ENCODE measurements at regions of chr12 and their contacts with region 1.

Region 1: DNA sequence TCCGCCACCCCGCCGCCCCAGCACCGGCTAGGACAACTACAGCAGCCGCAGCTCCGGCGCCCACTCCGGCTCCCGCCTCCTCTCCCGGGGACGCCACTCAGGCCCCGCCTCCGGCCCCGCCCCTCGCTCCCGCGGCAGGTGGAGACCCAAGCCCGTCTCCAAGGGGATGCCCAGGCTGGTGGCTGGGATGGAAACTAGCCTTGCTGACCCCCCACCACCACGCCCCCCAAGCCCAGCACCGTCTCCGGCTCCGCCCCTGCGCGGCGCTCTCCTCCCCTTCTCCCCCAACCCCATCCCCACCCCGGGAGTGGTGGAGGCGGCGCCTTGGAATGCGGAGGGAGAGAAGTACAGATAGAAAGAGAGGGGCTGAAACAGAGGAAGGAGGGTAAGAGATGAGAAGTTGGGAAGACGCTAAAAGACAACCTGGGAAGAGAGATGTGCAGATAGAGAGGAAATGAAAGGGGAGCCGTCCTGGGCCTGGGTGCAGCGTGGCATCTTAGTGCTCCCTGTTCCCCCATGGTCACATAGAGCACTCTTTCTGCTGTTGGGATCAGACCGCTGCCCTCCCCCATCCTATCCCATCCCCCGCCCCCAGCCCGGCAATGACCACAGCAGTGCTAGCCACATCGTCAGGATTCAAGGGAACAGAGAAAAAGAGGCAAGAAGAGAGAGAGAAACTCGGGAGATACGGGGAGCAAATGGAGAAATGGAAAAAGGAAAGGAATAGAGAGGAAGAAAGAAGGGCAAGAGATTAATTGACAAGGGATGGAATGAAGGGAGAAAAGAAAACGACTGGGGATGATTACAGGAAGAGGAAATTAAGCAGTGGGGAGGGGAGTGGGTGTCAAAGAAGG is at the start of gene ITGA7:
- DNase-seq: peak; percentile 86 to 94 (median 92)
- ATAC-seq: peak; percentile 9 to 55 (median 52)
- H3K4me3 ChIP-seq: peak within 1 kb of the TSS; percentile 48 to 87 (median 71)
- H3K27ac ChIP-seq: peak within 1 kb of the TSS; percentile 65 to 99 (median 92)
- H3K4me1 ChIP-seq: peaks cover 0 to 59% (median 26%) of the 10 kb centered on the region in 12 donors
- H3K27me3 ChIP-seq: no peaks in the 10 kb centered on the region
- CTCF ChIP-seq: no peak
- POLR2A ChIP-seq: peak in 1 of 2 donors; percentile 24
- total RNA-seq, gene ITGA7: 199 to 1,007 (median 620) TPM

Region 2: DNA sequence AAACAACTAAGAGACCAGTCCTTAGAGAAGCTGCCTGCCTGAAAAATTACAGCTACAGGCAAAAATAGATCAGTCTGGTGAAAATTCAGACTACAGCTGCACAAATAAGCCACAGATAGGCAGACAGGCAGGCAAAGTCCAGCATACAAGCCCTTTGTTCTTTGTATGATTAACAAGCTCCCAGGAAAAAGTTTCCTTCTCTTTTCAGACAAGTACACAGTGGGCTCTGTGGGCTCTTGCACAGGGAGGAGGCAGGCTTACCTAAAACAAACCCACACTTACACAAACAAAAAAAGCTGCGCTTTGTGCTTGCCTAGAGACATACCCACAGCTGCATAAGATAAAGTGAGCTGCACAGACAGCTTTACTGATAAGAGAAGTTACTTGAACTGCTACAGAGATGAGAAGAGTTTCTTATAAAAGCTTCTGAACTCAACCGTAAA is 208.2 kb before region 1 on chr12:
- intact Hi-C with region 1: no loop called
- DNase-seq: no peak
- ATAC-seq: no peak
- H3K4me3 ChIP-seq: no peak overlapping the region
- H3K27ac ChIP-seq: no peak overlapping the region
- H3K4me1 ChIP-seq: no peaks in the 10 kb centered on the region
- H3K27me3 ChIP-seq: no peaks in the 10 kb centered on the region
- CTCF ChIP-seq: no peak
- POLR2A ChIP-seq: no peak

Region 3: DNA sequence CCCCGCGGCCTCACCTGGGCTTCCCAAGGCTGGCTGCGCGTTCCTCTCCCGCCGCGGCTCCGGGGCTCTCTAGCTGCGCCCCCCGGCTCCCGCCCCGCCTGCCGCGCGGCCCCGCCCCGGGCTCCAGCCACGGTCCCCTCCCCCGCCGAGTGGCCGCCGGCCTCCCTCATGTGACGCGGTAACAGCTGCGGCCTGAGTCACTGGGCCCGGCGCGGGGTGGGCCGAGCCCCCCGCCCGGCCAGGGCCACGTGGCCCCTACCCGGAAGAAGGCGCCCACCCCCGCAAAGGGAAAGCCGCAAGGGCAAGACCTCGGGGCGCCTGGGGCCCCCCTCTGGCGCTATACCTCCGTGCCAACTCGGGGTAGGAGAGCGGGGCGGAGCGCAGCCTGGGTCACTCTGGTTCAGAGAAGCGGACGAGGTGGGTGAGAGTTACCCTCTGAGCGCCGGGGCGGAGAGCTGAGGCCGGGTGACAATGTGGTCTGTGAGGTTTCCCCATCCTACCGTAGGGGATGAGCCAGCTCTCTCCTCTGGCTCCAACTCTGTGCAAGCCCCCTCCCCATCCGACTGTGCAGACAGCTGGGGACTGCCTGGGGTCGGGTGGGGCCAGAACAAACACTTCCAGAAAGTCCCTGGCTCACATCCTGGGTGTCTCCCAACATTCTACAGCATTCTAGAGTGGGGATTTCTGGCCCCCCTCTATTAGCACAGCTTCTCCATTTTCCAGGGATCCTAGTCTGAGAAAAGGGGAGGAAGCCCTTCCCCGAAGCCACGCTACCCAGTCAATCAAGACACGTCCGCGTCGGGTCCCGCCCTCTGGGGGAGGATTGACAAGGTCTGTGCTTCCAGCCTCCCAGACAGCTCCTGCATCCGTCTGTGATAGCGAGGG is 21.1 kb after region 1 on chr12 and contains the start of gene CD63:
- intact Hi-C with region 1: loop called in 1 of 10 experiments (anchors 2 kb)
- DNase-seq: peak; percentile 94 to 96 (median 94)
- ATAC-seq: peak; percentile 78 to 89 (median 85)
- H3K4me3 ChIP-seq: peak within 1 kb of the TSS; percentile 64 to 96 (median 86)
- H3K27ac ChIP-seq: peak within 1 kb of the TSS; percentile 97 to 100 (median 99)
- H3K4me1 ChIP-seq: peaks cover 10 to 56% (median 45%) of the 10 kb centered on the region in 12 donors
- H3K27me3 ChIP-seq: no peaks in the 10 kb centered on the region
- CTCF ChIP-seq: no peak
- POLR2A ChIP-seq: peak in 1 of 2 donors; percentile 86
- total RNA-seq, gene CD63: 475 to 1,670 (median 767) TPM

Measured in heart left ventricle (tissue), 16 donors.